CD8-positive, alpha-beta T cell (primary cell): ENCODE measurements at regions of chr4 and their contacts with region 1.

Region 1: GRCh38 chr4:16026160-16026761 is 57.6 kb downstream of the PROM1 start:
- DNase-seq: peak in 3 of 9 experiments; percentile 39 to 73 (median 64)
- ATAC-seq: no peak
- H3K4me3 ChIP-seq: no peak overlapping the region
- H3K4me3 Mint-ChIP-seq: no peak overlapping the region
- H3K27ac ChIP-seq: no peak overlapping the region
- H3K27ac Mint-ChIP-seq: no peak overlapping the region
- H3K4me1 ChIP-seq: no peaks in the 10 kb centered on the region
- H3K4me1 Mint-ChIP-seq: no peaks in the 10 kb centered on the region
- H3K27me3 ChIP-seq: peaks cover 2 to 4% of the 10 kb centered on the region in 2 experiments
- H3K27me3 Mint-ChIP-seq: peaks cover 5% of the 10 kb centered on the region
- CTCF ChIP-seq: peak; percentile 94

Region 2: GRCh38 chr4:15043226-15043625 is 983.0 kb before region 1 on chr4:
- CTCF ChIA-PET with region 1: no interaction called
- POLR2A ChIA-PET with region 1: no interaction called
- intact Hi-C with region 1: no loop called
- DNase-seq: no peak
- ATAC-seq: no peak
- H3K4me3 ChIP-seq: no peak overlapping the region
- H3K4me3 Mint-ChIP-seq: no peak overlapping the region
- H3K27ac ChIP-seq: no peak overlapping the region
- H3K27ac Mint-ChIP-seq: no peak overlapping the region
- H3K4me1 ChIP-seq: no peaks in the 10 kb centered on the region
- H3K4me1 Mint-ChIP-seq: peaks cover 6% of the 10 kb centered on the region
- H3K27me3 ChIP-seq: no peaks in the 10 kb centered on the region
- H3K27me3 Mint-ChIP-seq: no peaks in the 10 kb centered on the region
- CTCF ChIP-seq: no peak

Region 3: DNA sequence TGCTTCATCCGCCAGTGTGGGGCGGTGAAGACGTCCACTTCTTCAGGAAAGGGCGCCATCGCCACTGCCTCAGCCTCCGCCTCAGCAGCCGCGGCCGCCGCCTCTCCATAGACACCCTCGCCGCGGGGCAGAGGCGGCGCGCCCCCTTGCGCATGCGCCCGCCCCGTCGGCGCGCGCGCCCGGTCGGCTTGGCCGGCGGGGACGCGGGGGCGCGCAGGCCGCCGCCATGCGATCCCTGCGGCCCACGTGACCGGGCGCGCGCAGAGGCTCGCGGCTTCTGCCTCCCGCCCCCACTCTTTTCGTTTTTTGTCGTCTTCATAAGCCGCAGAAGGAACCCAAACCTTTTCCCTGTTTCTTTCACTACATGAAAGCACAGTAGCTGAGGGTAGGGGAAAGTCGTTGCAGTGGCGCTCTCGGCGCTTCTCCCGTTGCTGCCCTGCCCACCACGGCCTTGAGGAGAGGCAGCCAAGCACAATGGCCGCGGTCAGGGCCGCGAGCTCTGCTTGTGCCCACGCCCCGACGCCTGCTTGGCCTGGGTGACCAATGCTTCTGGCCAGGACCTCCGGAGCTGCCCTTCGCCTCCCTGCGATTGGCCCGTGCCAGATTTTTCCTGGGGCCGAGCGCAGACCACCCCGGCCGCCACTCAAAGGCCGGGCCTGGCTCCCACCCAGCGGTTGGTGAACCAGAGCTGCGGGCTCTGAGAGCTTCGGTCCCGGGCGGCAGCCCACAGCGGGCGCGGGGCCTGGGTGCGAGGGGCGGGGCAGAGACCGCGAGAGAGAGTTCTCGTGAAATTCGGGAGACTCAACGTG is 370.8 kb before region 1 on chr4 and contains the start of gene FBXL5:
- CTCF ChIA-PET with region 1: no interaction called
- POLR2A ChIA-PET with region 1: no interaction called
- intact Hi-C with region 1: no loop called
- DNase-seq: peak; percentile 66 to 95 (median 80)
- ATAC-seq: peak; percentile 79
- H3K4me3 ChIP-seq: peak within 1 kb of the TSS; percentile 67 to 85
- H3K4me3 Mint-ChIP-seq: peak within 1 kb of the TSS; percentile 98
- H3K27ac ChIP-seq: peak within 1 kb of the TSS; percentile 88 to 92
- H3K27ac Mint-ChIP-seq: peak within 1 kb of the TSS; percentile 97
- H3K4me1 ChIP-seq: peaks cover 51% of the 10 kb centered on the region
- H3K4me1 Mint-ChIP-seq: peaks cover 46% of the 10 kb centered on the region
- H3K27me3 ChIP-seq: no peaks in the 10 kb centered on the region
- H3K27me3 Mint-ChIP-seq: no peaks in the 10 kb centered on the region
- CTCF ChIP-seq: no peak
- total RNA-seq, gene FBXL5: 60.4 to 61.7 TPM

Region 4: DNA sequence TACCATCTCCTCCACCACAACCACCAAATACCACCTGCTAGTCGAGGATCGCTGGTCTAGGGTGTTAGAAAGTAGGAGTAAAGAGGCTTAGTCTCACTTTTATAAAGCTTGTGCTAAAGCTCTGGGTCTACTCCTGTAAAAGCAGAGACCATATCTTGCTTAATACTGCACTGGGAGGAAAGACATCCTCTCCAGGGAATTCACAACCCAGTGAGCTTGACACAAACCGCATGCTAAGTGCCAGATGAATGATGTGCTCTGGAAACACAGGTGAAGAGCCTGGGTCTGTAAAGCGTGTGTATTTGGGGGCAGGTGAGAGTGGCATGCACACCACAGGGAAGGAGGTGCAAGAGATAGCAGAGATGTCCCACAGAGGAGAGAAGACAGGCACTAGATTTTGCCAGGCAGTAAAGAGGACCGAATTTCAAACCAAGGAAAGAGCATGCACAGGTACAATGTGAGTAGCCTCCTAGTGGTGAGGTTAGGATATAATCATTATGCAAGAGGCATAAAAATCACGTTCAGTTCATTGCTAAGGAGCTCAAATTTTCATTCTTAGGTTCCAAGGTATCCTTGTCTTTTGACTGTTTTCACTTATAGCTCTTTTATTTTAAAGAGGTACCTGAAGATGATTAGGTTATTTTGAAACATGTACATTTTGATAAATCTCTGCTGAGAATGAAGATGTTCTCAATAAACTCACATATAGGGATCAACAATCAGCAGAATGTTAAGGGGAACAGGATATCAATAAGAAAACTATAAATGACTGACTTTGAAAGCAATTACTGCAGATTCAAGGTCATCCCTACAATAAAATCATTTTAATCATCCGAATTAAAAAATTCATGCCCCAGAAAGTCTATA is 179.3 kb after region 1 on chr4:
- CTCF ChIA-PET with region 1: interaction called, 7 read pairs
- POLR2A ChIA-PET with region 1: no interaction called
- intact Hi-C with region 1: loop called (anchors 2 to 5 kb)
- DNase-seq: peak in 2 of 9 experiments; percentile 33 to 56
- ATAC-seq: peak; percentile 92
- H3K4me3 ChIP-seq: no peak overlapping the region
- H3K4me3 Mint-ChIP-seq: no peak overlapping the region
- H3K27ac ChIP-seq: no peak overlapping the region
- H3K27ac Mint-ChIP-seq: peak overlapping the region; percentile 46
- H3K4me1 ChIP-seq: peaks cover 17% of the 10 kb centered on the region
- H3K4me1 Mint-ChIP-seq: peaks cover 38% of the 10 kb centered on the region
- H3K27me3 ChIP-seq: no peaks in the 10 kb centered on the region
- H3K27me3 Mint-ChIP-seq: no peaks in the 10 kb centered on the region
- CTCF ChIP-seq: peak; percentile 70

Region 5: DNA sequence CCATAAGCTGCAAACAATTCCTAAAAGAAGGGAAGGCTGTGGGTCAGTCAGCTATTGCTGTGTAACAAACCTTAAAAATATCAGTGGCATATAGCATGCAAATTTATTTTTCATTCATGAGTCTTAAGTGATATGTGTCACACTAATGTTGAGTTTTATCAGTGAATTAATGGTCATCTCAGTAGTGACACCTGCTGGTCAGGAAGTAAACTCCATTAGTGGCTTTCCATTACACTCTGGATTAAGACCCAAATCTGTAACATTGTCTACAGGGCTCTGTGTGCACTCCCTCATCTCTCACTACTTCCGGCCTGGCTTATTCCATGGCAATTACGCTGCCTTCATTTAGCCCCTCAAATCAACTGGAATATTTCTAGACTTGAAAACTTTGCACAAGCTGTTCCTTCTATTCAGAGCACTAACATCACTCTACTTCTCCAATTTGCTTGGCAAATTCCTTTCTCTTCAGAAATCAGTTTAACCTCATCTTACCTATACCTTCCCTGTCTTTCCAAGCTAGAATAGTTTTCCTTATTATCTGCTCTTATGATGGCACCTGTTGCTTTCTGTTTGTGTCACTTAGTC is 417.3 kb after region 1 on chr4:
- CTCF ChIA-PET with region 1: interaction called, 3 read pairs
- POLR2A ChIA-PET with region 1: no interaction called
- intact Hi-C with region 1: loop called in 1 of 2 experiments (anchors 1 kb)
- DNase-seq: peak in 2 of 9 experiments; percentile 30 to 44
- ATAC-seq: no peak
- H3K4me3 ChIP-seq: no peak overlapping the region
- H3K4me3 Mint-ChIP-seq: no peak overlapping the region
- H3K27ac ChIP-seq: no peak overlapping the region
- H3K27ac Mint-ChIP-seq: no peak overlapping the region
- H3K4me1 ChIP-seq: no peaks in the 10 kb centered on the region
- H3K4me1 Mint-ChIP-seq: no peaks in the 10 kb centered on the region
- H3K27me3 ChIP-seq: no peaks in the 10 kb centered on the region
- H3K27me3 Mint-ChIP-seq: peaks cover 4% of the 10 kb centered on the region
- CTCF ChIP-seq: peak; percentile 54

Region 6: GRCh38 chr4:17324386-17324830 is 1298.1 kb after region 1 on chr4:
- CTCF ChIA-PET with region 1: interaction called, 4 read pairs
- POLR2A ChIA-PET with region 1: no interaction called
- intact Hi-C with region 1: loop called in 1 of 2 experiments (anchors 2 kb)
- DNase-seq: peak in 8 of 9 experiments; percentile 30 to 66 (median 55)
- ATAC-seq: peak; percentile 66
- H3K4me3 ChIP-seq: no peak overlapping the region
- H3K4me3 Mint-ChIP-seq: peak overlapping the region; percentile 56
- H3K27ac ChIP-seq: no peak overlapping the region
- H3K27ac Mint-ChIP-seq: no peak overlapping the region
- H3K4me1 ChIP-seq: peaks cover 4% of the 10 kb centered on the region
- H3K4me1 Mint-ChIP-seq: peaks cover 11% of the 10 kb centered on the region
- H3K27me3 ChIP-seq: no peaks in the 10 kb centered on the region
- H3K27me3 Mint-ChIP-seq: no peaks in the 10 kb centered on the region
- CTCF ChIP-seq: peak; percentile 61

Region 7: GRCh38 chr4:17468371-17469221 is 1442.3 kb after region 1 on chr4:
- CTCF ChIA-PET with region 1: no interaction called
- POLR2A ChIA-PET with region 1: no interaction called
- intact Hi-C with region 1: loop called in 1 of 2 experiments (anchors 2 kb)
- DNase-seq: peak in 1 of 9 experiments; percentile 18
- ATAC-seq: no peak
- H3K4me3 ChIP-seq: no peak overlapping the region
- H3K4me3 Mint-ChIP-seq: no peak overlapping the region
- H3K27ac ChIP-seq: no peak overlapping the region
- H3K27ac Mint-ChIP-seq: no peak overlapping the region
- H3K4me1 ChIP-seq: no peaks in the 10 kb centered on the region
- H3K4me1 Mint-ChIP-seq: no peaks in the 10 kb centered on the region
- H3K27me3 ChIP-seq: no peaks in the 10 kb centered on the region
- H3K27me3 Mint-ChIP-seq: no peaks in the 10 kb centered on the region
- CTCF ChIP-seq: no peak